Activated CD4-positive, alpha-beta T cell treated with anti-CD3 and anti-CD28 coated beads, Interleukin-2, amount 10 ng/mL, durations not matched to agents 7 days and 5 days (primary cell): ENCODE measurements at regions of chr2 and their contacts with region 1.

Region 1: DNA sequence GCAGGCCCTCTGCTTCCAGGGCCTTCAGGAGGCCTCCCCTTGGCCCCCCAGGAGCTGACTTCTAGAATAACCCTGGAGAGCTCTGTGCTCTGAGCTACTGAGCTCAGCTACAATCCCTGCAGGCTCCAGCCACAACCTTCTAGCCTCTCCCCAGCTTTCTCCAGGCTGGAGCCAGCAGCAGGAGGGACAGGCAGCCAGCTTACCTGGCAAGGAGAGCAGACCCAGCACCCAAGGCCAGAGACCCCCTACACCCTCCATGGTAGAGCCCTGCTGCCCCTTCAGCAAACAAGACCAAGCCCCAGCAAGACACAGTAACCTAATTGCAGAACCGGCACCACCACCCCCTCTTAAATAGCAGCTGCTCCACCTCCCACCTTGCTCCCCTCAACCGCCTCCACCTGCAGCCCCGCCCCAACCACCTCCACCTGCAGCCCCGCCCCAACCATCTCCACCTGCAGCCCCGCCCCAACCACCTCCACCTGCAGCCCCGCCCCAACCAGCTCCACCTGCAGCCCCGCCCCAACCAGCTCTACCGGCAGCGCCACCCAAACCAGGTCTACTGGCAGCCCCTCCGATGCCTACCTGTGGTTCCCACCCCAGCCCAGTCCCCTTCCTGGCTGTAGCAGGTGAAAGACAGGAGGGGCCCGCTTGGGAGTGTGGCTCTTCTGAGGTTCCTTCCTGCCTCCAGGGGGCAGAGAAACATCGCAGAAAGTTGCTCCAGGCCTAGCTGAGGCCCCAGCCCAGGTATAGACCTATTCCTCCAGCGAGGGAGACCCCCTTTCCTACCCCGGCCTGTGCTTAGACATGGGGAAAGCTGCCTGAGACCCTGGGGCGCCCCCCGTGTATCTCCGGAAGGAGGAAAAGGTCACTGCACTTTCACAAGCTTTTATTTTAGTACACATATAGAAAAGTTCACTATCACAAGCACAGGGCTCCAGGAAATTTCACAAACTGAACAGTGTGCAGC is at the start of gene ASTL:
- DNase-seq: peak; percentile 76
- H3K4me3 Mint-ChIP-seq: no peak within 1 kb of the TSS
- H3K27ac Mint-ChIP-seq: no peak within 1 kb of the TSS
- H3K4me1 Mint-ChIP-seq: peaks cover 19% of the 10 kb centered on the region
- H3K27me3 Mint-ChIP-seq: no peaks in the 10 kb centered on the region
- total RNA-seq, gene ASTL: 0.22 TPM in 1 of 2 experiments, not detected in the other

Region 2: DNA sequence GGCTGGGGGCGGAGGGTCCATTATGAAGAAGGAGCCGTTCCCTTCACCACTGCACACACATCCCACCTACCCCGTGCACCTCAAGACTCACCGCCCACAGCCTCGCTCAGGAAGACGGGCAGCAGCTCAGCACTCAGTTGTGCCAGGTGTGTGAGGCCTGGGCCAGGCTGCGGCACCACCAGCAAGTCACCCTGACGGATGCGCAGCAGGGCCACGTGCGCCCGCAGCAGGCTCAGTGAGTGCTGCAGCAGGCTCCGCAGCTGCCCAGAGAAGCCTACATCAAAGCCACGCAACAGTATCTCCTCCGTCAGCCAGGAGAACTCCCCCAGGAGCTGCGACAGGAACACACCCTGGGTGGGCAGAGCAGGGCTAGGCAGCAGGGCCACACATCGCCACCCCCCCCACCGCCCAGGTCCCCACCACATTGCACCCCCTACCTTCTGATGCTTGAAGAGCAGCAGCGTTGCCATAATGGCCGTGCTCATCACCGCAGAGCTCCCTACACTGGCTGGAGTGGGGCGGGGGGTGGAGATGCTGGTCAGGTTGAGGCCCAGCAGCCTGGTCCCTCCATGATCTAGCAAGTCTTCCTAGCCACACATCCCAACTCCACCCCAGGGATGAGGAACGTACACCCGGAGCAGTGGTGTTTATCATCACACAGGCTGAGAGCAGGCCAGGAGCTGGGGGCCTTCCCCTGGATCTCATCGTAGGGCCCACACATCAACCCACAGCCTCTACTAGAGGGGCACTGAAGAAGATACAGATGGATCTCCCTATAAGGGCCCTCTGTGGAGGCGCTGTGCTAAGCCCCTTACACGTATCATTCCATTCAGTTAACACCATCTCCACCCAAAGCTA is 113.9 kb before region 1 on chr2:
- CTCF ChIA-PET with region 1: interaction called, 11 read pairs
- POLR2A ChIA-PET with region 1: no interaction called
- DNase-seq: no peak
- H3K4me3 Mint-ChIP-seq: no peak overlapping the region
- H3K27ac Mint-ChIP-seq: no peak overlapping the region
- H3K4me1 Mint-ChIP-seq: peaks cover 3% of the 10 kb centered on the region
- H3K27me3 Mint-ChIP-seq: no peaks in the 10 kb centered on the region

Region 3: GRCh38 chr2:96099861-96100798 is 38.3 kb before region 1 on chr2:
- CTCF ChIA-PET with region 1: no interaction called
- POLR2A ChIA-PET with region 1: no interaction called
- DNase-seq: peak; percentile 3
- H3K4me3 Mint-ChIP-seq: no peak overlapping the region
- H3K27ac Mint-ChIP-seq: no peak overlapping the region
- H3K4me1 Mint-ChIP-seq: no peaks in the 10 kb centered on the region
- H3K27me3 Mint-ChIP-seq: peaks cover 3% of the 10 kb centered on the region

Region 4: GRCh38 chr2:96116879-96117697 is 21.4 kb before region 1 on chr2:
- CTCF ChIA-PET with region 1: interaction called, 26 read pairs
- POLR2A ChIA-PET with region 1: no interaction called
- DNase-seq: peak; percentile 50
- H3K4me3 Mint-ChIP-seq: peak overlapping the region; percentile 52
- H3K27ac Mint-ChIP-seq: no peak overlapping the region
- H3K4me1 Mint-ChIP-seq: peaks cover 17% of the 10 kb centered on the region
- H3K27me3 Mint-ChIP-seq: peaks cover 40% of the 10 kb centered on the region

Region 5: GRCh38 chr2:96152301-96153165 is 14.1 kb after region 1 on chr2:
- CTCF ChIA-PET with region 1: interaction called, 25 read pairs
- POLR2A ChIA-PET with region 1: no interaction called
- DNase-seq: no peak
- H3K4me3 Mint-ChIP-seq: no peak overlapping the region
- H3K27ac Mint-ChIP-seq: no peak overlapping the region
- H3K4me1 Mint-ChIP-seq: peaks cover 72% of the 10 kb centered on the region
- H3K27me3 Mint-ChIP-seq: no peaks in the 10 kb centered on the region

Region 6: GRCh38 chr2:96180521-96180920 is 42.1 kb after region 1 on chr2:
- CTCF ChIA-PET with region 1: interaction called, 239 read pairs
- POLR2A ChIA-PET with region 1: interaction called, 17 read pairs
- DNase-seq: no peak
- H3K4me3 Mint-ChIP-seq: no peak overlapping the region
- H3K27ac Mint-ChIP-seq: no peak overlapping the region
- H3K4me1 Mint-ChIP-seq: peaks cover 8% of the 10 kb centered on the region
- H3K27me3 Mint-ChIP-seq: no peaks in the 10 kb centered on the region

Region 7: DNA sequence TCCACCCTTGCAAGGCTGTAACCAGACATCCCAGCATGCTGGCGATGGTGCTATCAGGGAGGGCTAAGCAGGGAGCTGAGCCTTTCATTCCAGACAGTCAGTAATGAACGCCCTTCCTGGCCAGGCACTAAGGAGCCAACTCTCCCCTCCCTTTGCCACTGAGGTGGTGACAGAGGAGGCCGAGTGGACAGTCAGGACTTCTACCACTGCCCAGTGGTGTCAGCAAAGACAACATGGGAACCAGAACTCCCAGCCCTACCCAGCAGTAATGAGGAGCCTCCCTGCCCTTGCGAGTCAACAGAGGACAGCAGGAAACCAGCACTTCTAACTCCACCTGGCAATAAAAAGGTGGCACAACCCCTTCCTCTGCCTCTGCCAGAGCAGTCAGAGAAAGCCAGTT is 1643.5 kb after region 1 on chr2:
- CTCF ChIA-PET with region 1: no interaction called
- POLR2A ChIA-PET with region 1: no interaction called
- DNase-seq: no peak
- H3K4me3 Mint-ChIP-seq: no peak overlapping the region
- H3K27ac Mint-ChIP-seq: no peak overlapping the region
- H3K4me1 Mint-ChIP-seq: no peaks in the 10 kb centered on the region
- H3K27me3 Mint-ChIP-seq: no peaks in the 10 kb centered on the region